Endothelial cell of umbilical vein (primary cell): ENCODE measurements at regions of chr5 and their contacts with region 1.

Region 1: DNA sequence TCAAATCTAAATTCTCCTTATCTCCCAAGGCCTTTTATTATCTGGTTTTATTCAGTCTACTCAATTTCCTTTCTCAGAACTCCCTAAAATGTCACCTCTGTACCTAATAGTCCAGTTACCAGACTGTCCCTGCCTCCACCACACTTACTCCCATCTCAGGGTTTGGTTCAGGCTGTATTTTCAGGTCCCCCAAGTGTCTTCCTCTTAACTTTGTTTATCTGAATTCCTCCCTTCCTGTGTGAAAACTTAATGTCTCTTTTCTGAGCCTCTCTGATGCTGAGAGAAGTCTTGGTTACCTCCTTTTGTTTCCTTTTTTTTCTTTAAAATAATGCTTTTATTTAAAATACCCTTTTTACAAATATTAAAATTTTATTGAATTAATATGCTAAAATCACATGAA is 133.4 kb downstream of the PAM start:
- DNase-seq: no peak
- H3K4me3 ChIP-seq: no peak overlapping the region
- H3K27ac ChIP-seq: no peak overlapping the region
- H3K4me1 ChIP-seq: no peaks in the 10 kb centered on the region
- H3K27me3 ChIP-seq: no peaks in the 10 kb centered on the region
- CTCF ChIP-seq: no peak
- POLR2A ChIP-seq: no peak

Region 2: GRCh38 chr5:102905056-102905455 is 16.6 kb after region 1 on chr5:
- CTCF ChIA-PET with region 1: interaction called, 5 read pairs
- POLR2A ChIA-PET with region 1: no interaction called
- dilution Hi-C with region 1: no loop called
- intact Hi-C with region 1: loop called (anchors 1 kb)
- DNase-seq: no peak
- H3K4me3 ChIP-seq: no peak overlapping the region
- H3K27ac ChIP-seq: no peak overlapping the region
- H3K4me1 ChIP-seq: peaks cover 3% of the 10 kb centered on the region
- H3K27me3 ChIP-seq: no peaks in the 10 kb centered on the region
- CTCF ChIP-seq: no peak
- POLR2A ChIP-seq: no peak